Psoas muscle (tissue), 8 donors: ENCODE measurements at regions of chr22 and their contacts with region 1.

Region 1: GRCh38 chr22:29524440-29525191 is 28.9 kb downstream of the THOC5 start:
- DNase-seq: no peak
- ATAC-seq: peak; percentile 42 to 71 (median 63)
- H3K4me3 ChIP-seq: no peak overlapping the region
- H3K27ac ChIP-seq: no peak overlapping the region
- H3K4me1 ChIP-seq: no peaks in the 10 kb centered on the region
- H3K27me3 ChIP-seq: no peaks in the 10 kb centered on the region
- CTCF ChIP-seq: peak; percentile 33

Region 2: GRCh38 chr22:29288837-29289236 is 235.8 kb before region 1 on chr22:
- intact Hi-C with region 1: loop called in 1 of 2 experiments (anchors 10 kb)
- DNase-seq: no peak
- ATAC-seq: no peak
- H3K4me3 ChIP-seq: no peak overlapping the region
- H3K27ac ChIP-seq: no peak overlapping the region
- H3K4me1 ChIP-seq: peaks cover 37% of the 10 kb centered on the region
- H3K27me3 ChIP-seq: no peaks in the 10 kb centered on the region
- CTCF ChIP-seq: no peak

Region 3: DNA sequence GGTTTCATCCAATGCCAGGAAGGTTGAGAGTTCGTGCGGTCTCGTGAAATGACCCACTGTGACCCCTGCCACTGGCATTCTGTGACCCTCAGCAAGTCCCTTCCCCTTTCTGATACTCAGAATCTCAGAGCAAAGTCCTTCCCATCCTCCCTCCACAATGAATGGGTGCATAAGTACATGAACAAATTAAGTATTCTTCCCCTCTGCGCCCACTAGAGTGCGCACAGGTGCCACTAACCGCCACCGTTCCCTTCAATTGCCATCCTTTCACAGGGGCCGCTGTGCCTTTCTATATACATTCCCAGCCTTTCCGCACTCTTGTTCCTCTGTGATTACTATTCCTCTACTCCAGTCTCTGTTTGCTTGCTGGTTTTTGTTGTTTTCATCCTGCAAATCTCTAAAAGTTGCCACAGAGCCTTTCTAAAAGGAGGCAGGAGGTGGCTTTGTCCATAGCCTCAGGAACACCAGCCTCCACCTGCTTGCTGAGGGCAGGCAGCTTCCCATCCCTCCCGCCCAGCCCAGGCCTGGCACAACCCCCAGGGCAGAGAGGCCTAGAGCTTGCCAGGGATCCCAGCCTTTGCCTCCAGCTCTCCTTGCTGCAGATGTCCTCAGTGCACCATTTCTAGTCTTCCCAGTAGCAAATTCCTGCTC is 129.6 kb before region 1 on chr22:
- intact Hi-C with region 1: loop called (anchors 1 to 5 kb)
- DNase-seq: peak; percentile 67 to 76
- ATAC-seq: peak; percentile 84 to 95 (median 90)
- H3K4me3 ChIP-seq: no peak overlapping the region
- H3K27ac ChIP-seq: no peak overlapping the region
- H3K4me1 ChIP-seq: peaks cover 5% of the 10 kb centered on the region
- H3K27me3 ChIP-seq: no peaks in the 10 kb centered on the region
- CTCF ChIP-seq: peak; percentile 83

Region 4: GRCh38 chr22:29716814-29717545 is 192.4 kb after region 1 on chr22:
- intact Hi-C with region 1: no loop called
- DNase-seq: peak; percentile 60 to 70
- ATAC-seq: peak; percentile 66 to 74 (median 71)
- H3K4me3 ChIP-seq: no peak overlapping the region
- H3K27ac ChIP-seq: no peak overlapping the region
- H3K4me1 ChIP-seq: no peaks in the 10 kb centered on the region
- H3K27me3 ChIP-seq: peaks cover 0 to 23% (median 10%) of the 10 kb centered on the region in 3 donors
- CTCF ChIP-seq: no peak